Ovary (tissue), 10 donors: ENCODE measurements at regions of chrX and their contacts with region 1.

Region 1: GRCh38 chrX:19174401-19175025 is 52.2 kb upstream of the ADGRG2 start:
- DNase-seq: no peak
- H3K4me3 ChIP-seq: no peak overlapping the region
- H3K27ac ChIP-seq: no peak overlapping the region
- H3K4me1 ChIP-seq: no peaks in the 10 kb centered on the region
- H3K27me3 ChIP-seq: no peaks in the 10 kb centered on the region
- CTCF ChIP-seq: no peak
- EP300 ChIP-seq: no peak
- POLR2A ChIP-seq: no peak

Region 2: DNA sequence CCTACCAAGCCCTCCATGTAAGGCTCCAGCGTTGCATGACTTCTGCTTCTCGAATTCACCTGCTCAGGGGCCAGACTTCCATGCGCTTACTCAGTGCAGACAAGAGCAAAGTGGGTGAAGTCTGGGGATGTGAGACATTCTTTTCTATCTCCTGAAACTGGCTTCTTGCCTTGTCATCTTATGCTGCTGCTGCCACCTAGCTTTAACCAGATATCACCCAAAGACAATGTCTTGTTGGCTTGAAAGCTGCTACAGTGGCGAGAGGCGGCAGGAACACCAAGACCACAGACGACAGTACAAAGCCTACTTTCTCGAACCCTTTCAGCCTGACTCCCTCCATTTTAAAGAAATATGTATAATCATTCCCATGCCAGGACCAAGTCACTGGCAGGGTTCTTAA is 51.4 kb after region 1 on chrX:
- intact Hi-C with region 1: loop called in 1 of 4 experiments (anchors 5 kb)
- DNase-seq: no peak
- H3K4me3 ChIP-seq: no peak overlapping the region
- H3K27ac ChIP-seq: no peak overlapping the region
- H3K4me1 ChIP-seq: no peaks in the 10 kb centered on the region
- H3K27me3 ChIP-seq: no peaks in the 10 kb centered on the region
- CTCF ChIP-seq: no peak
- EP300 ChIP-seq: no peak
- POLR2A ChIP-seq: no peak